ENCODE measurements at regions of chr17 and their contacts with region 1.

Region 1: DNA sequence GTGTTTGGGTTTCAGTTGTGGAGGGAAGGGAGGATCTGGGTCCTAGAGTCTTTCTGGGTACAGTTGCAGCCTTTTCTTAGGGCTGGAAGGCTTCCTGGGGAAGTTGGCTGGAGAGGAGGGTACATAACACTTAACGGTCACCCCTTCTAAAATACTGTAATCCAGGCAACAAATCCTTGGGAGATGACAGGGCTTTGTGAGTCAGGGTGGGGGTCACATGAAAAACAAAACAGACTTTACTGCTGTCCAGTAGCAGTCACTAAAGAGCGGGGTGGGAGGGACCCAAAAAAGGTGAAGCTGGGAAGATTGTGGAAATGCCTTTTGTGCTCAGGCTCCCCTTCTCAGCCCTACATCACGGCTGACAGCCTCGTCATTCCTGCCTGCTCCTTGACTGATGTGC is 6.3 kb downstream of the SAP30BP start:
- DNase-seq: no peak
- H3K4me3 ChIP-seq: no peak overlapping the region
- H3K4me3 Mint-ChIP-seq: peak overlapping the region in 1 of 8 donors; percentile 9
- H3K27ac ChIP-seq: no peak overlapping the region
- H3K27ac Mint-ChIP-seq: peak overlapping the region in 2 of 7 donors; percentile 20 to 32
- H3K4me1 ChIP-seq: peaks cover 11% of the 10 kb centered on the region
- H3K4me1 Mint-ChIP-seq: peaks cover 13 to 26% (median 18%) of the 10 kb centered on the region in 4 donors
- H3K27me3 ChIP-seq: no peaks in the 10 kb centered on the region
- H3K27me3 Mint-ChIP-seq: no peaks in the 10 kb centered on the region

Region 2: DNA sequence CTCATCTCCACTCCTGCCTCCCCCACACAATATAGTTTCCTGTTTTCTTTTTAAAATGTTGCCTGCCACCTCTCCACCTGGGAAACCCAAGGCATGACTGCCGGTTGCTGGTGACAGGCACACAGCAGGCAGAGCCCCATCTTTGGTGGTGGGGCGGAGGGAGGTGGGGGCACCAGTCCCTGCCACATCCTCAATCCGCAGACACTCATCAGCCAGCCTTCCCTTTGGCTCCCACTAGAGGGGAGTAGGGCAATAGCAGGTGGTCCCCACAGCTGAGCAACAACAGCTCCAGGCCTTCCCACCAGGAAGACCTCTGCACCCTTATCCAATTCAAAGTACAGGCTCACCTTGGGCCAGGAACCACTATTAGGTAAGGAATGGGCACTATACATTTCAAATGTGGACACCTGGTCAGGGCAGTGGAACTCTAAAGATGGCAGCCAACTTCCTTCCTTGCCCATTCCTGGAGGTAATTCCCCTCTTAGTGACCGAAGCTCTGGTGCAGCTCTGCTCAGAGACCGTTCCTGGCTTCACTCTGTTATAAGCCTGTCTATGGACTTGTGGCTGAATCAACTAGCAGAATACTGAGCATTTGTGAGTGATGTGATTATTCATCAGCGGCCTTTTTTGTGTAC is 20.5 kb before region 1 on chr17:
- CTCF ChIA-PET with region 1: interaction called, 23 read pairs
- POLR2A ChIA-PET with region 1: no interaction called
- intact Hi-C with region 1: no loop called
- DNase-seq: peak in 1 of 5 donors; percentile 7
- H3K4me3 ChIP-seq: no peak overlapping the region
- H3K4me3 Mint-ChIP-seq: no peak overlapping the region
- H3K27ac ChIP-seq: no peak overlapping the region
- H3K27ac Mint-ChIP-seq: peak overlapping the region in 1 of 7 donors; percentile 18
- H3K4me1 ChIP-seq: no peaks in the 10 kb centered on the region
- H3K4me1 Mint-ChIP-seq: peaks cover 0 to 2% (median 0%) of the 10 kb centered on the region in 4 donors
- H3K27me3 ChIP-seq: no peaks in the 10 kb centered on the region
- H3K27me3 Mint-ChIP-seq: no peaks in the 10 kb centered on the region

Region 3: GRCh38 chr17:75661531-75661930 is 12.0 kb before region 1 on chr17:
- CTCF ChIA-PET with region 1: interaction called, 23 read pairs
- POLR2A ChIA-PET with region 1: interaction called, 3 read pairs
- intact Hi-C with region 1: no loop called
- DNase-seq: no peak
- H3K4me3 ChIP-seq: no peak overlapping the region
- H3K4me3 Mint-ChIP-seq: no peak overlapping the region
- H3K27ac ChIP-seq: no peak overlapping the region
- H3K27ac Mint-ChIP-seq: no peak overlapping the region
- H3K4me1 ChIP-seq: peaks cover 8% of the 10 kb centered on the region
- H3K4me1 Mint-ChIP-seq: peaks cover 0 to 10% (median 2%) of the 10 kb centered on the region in 4 donors
- H3K27me3 ChIP-seq: no peaks in the 10 kb centered on the region
- H3K27me3 Mint-ChIP-seq: no peaks in the 10 kb centered on the region

Region 4: GRCh38 chr17:75689441-75689873 is 16.0 kb after region 1 on chr17:
- CTCF ChIA-PET with region 1: interaction called, 12 read pairs
- POLR2A ChIA-PET with region 1: no interaction called
- intact Hi-C with region 1: no loop called
- DNase-seq: peak; percentile 37 to 59 (median 55)
- H3K4me3 ChIP-seq: no peak overlapping the region
- H3K4me3 Mint-ChIP-seq: peak overlapping the region in 5 of 8 donors; percentile 7 to 58 (median 36)
- H3K27ac ChIP-seq: no peak overlapping the region
- H3K27ac Mint-ChIP-seq: peak overlapping the region; percentile 49 to 87 (median 77)
- H3K4me1 ChIP-seq: peaks cover 20% of the 10 kb centered on the region
- H3K4me1 Mint-ChIP-seq: peaks cover 32 to 57% (median 37%) of the 10 kb centered on the region in 4 donors
- H3K27me3 ChIP-seq: no peaks in the 10 kb centered on the region
- H3K27me3 Mint-ChIP-seq: no peaks in the 10 kb centered on the region

Region 5: GRCh38 chr17:75799398-75799797 is 125.9 kb after region 1 on chr17:
- CTCF ChIA-PET with region 1: no interaction called
- POLR2A ChIA-PET with region 1: no interaction called
- intact Hi-C with region 1: no loop called
- DNase-seq: no peak
- H3K4me3 ChIP-seq: no peak overlapping the region
- H3K4me3 Mint-ChIP-seq: no peak overlapping the region
- H3K27ac ChIP-seq: no peak overlapping the region
- H3K27ac Mint-ChIP-seq: peak overlapping the region in 2 of 7 donors; percentile 29 to 54
- H3K4me1 ChIP-seq: no peaks in the 10 kb centered on the region
- H3K4me1 Mint-ChIP-seq: peaks cover 9 to 13% (median 10%) of the 10 kb centered on the region in 4 donors
- H3K27me3 ChIP-seq: no peaks in the 10 kb centered on the region
- H3K27me3 Mint-ChIP-seq: no peaks in the 10 kb centered on the region

Region 6: GRCh38 chr17:75827252-75828115 is 154.0 kb after region 1 on chr17:
- CTCF ChIA-PET with region 1: no interaction called
- POLR2A ChIA-PET with region 1: no interaction called
- intact Hi-C with region 1: no loop called
- DNase-seq: peak; percentile 55 to 80 (median 71)
- H3K4me3 ChIP-seq: no peak overlapping the region
- H3K4me3 Mint-ChIP-seq: peak overlapping the region; percentile 17 to 73 (median 56)
- H3K27ac ChIP-seq: peak overlapping the region; percentile 59
- H3K27ac Mint-ChIP-seq: peak overlapping the region; percentile 66 to 91 (median 83)
- H3K4me1 ChIP-seq: peaks cover 26% of the 10 kb centered on the region
- H3K4me1 Mint-ChIP-seq: peaks cover 5 to 24% (median 14%) of the 10 kb centered on the region in 4 donors
- H3K27me3 ChIP-seq: no peaks in the 10 kb centered on the region
- H3K27me3 Mint-ChIP-seq: no peaks in the 10 kb centered on the region